ENCODE measurements at regions of chr13 and their contacts with region 1.

Region 1: DNA sequence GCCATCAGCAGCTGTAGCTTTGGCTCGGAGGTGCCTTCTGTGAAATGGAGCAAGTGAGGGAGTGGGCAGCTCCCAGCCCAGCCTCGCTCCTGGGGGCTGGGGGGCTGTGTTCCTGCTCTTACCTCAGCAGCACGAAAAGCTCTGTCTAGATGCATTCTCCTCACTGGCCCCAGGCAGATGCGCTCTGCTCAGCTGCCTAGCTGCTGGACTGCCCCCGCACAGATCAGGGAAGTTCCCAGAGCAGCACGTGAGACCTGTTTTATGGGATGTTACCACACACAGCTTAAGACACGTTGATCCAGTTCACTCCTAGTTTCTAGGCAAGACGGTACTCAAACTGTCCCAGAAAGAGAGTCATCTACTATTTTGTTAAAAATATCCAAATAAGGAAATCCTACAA is 13.6 kb downstream of the LCP1 start:
- DNase-seq: no peak
- H3K4me3 Mint-ChIP-seq: peak overlapping the region; percentile 47
- H3K27ac Mint-ChIP-seq: peak overlapping the region; percentile 96
- H3K4me1 Mint-ChIP-seq: peaks cover 92% of the 10 kb centered on the region
- H3K27me3 Mint-ChIP-seq: no peaks in the 10 kb centered on the region

Region 2: GRCh38 chr13:46143184-46143701 is 25.1 kb before region 1 on chr13:
- CTCF ChIA-PET with region 1: interaction called, 7 read pairs
- POLR2A ChIA-PET with region 1: interaction called, 10 read pairs
- DNase-seq: no peak
- H3K4me3 Mint-ChIP-seq: no peak overlapping the region
- H3K27ac Mint-ChIP-seq: peak overlapping the region; percentile 31
- H3K4me1 Mint-ChIP-seq: peaks cover 16% of the 10 kb centered on the region
- H3K27me3 Mint-ChIP-seq: no peaks in the 10 kb centered on the region

Region 3: DNA sequence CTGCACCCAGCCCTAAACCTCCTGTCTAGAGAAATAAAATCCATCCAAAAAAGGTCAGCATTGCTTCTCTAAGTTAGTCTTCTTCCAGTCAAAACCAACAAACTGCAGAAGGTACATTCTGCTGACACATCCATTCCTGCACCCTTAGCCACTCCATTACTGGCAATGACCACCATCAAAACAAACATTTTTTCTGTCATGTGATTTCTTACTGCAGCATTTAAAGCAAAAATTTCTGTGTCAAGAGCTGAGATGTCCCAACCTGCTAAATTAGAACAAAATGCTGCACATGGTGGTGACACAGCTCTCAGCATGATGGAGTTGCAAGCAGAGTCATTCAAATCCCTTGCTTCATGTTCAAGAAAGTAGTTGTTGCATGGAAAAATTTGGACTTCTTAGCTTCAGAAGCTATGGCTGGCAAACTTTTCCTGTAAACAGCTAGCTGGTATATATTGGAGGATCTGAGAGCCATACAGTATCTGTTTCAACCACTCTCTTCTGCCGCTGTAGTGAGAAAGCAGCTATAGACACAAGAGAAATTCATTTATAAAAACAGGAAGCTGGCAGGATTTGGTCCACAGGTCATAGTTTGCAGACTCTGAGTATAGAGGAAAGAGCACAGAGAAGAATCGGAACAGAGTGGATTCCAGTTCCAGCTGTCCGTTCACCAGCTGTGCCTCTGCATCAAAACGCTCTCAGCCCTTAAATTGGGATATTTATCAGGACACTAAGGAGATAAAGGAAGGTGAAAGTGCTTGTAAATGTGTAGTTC is 201.4 kb after region 1 on chr13:
- CTCF ChIA-PET with region 1: no interaction called
- POLR2A ChIA-PET with region 1: no interaction called
- DNase-seq: no peak
- H3K4me3 Mint-ChIP-seq: no peak overlapping the region
- H3K27ac Mint-ChIP-seq: no peak overlapping the region
- H3K4me1 Mint-ChIP-seq: no peaks in the 10 kb centered on the region
- H3K27me3 Mint-ChIP-seq: peaks cover 2% of the 10 kb centered on the region